ENCODE measurements at regions of chr17 and their contacts with region 1.

Region 1: GRCh38 chr17:49739641-49740271 is 24.2 kb downstream of the FAM117A start:
- DNase-seq: peak; percentile 81 to 90 (median 89)
- H3K4me3 ChIP-seq: peak overlapping the region; percentile 29 to 60 (median 38)
- H3K4me3 Mint-ChIP-seq: peak overlapping the region; percentile 77 to 90
- H3K27ac ChIP-seq: peak overlapping the region; percentile 94 to 98
- H3K27ac Mint-ChIP-seq: peak overlapping the region; percentile 98 to 100 (median 99)
- H3K4me1 ChIP-seq: peaks cover 90 to 95% of the 10 kb centered on the region in 2 donors
- H3K4me1 Mint-ChIP-seq: peaks cover 84% of the 10 kb centered on the region
- H3K27me3 ChIP-seq: no peaks in the 10 kb centered on the region
- H3K27me3 Mint-ChIP-seq: peaks cover 0 to 3% (median 2%) of the 10 kb centered on the region in 3 donors
- CTCF ChIP-seq: no peak

Region 2: DNA sequence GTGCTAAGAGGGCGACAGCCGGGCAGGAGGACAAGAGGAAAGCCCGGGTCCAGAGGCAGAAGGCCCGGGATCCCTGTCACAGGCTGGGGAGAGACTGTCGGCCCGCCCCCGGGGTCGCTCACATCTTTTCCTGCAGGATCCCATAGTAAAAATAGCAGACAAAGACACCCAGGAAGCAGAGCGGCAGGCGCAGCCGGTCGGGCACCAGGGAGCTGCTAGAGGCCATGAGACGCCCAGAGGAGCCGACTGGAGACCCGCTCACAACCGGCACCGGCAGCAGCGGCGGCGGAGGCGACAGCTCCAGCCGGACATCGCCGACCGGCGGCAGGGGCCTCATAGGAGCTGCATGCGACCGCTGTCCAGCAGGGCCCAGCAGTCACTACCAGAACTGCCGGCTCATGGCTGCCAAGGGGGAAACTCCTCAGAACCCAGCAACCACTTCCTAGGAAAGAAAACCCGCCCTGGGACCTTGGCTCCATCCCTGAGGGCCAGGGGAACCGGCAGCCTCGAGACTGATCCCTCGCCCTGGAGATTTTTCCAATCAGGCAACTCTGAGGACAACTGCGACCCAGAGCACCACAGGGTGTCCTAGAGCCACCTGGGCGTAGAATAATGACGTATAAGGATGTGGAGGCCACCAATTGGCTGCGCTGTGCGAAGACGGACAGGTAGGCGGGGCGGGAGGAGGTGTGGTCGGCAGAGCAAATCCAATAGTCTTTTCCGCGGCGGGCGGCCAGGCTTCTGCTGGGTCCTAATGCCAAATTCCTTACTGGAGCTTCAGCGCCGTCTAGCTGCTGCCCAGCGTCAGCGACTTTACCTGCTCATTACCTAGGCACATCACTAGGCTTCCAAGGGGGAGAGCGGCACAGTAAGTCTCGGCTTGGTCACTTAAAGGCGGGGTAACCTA is 31.9 kb before region 1 on chr17 and contains the start of gene SLC35B1:
- intact Hi-C with region 1: loop called in 1 of 2 experiments (anchors 5 kb)
- DNase-seq: peak; percentile 97 to 98 (median 98)
- H3K4me3 ChIP-seq: peak within 1 kb of the TSS; percentile 78 to 96 (median 94)
- H3K4me3 Mint-ChIP-seq: peak within 1 kb of the TSS; percentile 90 to 93
- H3K27ac ChIP-seq: peak within 1 kb of the TSS; percentile 65 to 99
- H3K27ac Mint-ChIP-seq: peak within 1 kb of the TSS; percentile 96 to 99 (median 99)
- H3K4me1 ChIP-seq: peaks cover 23 to 30% of the 10 kb centered on the region in 2 donors
- H3K4me1 Mint-ChIP-seq: peaks cover 29% of the 10 kb centered on the region
- H3K27me3 ChIP-seq: no peaks in the 10 kb centered on the region
- H3K27me3 Mint-ChIP-seq: no peaks in the 10 kb centered on the region
- CTCF ChIP-seq: peak; percentile 70
- polyA plus RNA-seq, gene SLC35B1: 56.0 to 61.0 (median 58.8) TPM